Heart right ventricle (tissue), 16 donors: ENCODE measurements at regions of chr11 and their contacts with region 1.

Region 1: DNA sequence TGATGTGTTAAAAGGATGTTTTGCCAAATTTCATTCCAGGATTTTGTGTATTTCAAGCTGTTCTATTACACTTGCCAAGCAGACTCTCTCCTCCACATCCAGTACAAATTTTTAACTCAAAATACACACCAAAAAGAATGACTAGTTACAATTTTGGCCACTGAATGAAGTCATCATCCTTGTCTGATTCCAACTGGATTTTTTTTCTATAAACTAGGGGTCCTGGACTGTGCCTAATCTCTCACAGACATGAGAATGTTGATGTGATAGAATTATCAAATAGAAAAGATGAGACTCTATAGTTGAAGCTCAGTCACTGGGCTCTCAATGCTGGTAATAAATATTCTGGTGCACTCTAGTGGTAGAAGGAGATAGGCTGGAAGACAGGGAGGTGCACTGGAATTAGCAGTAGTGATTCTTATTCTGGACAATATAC is 85.8 kb downstream of the FANCF start:
- DNase-seq: no peak
- ATAC-seq: peak in 1 of 8 donors; percentile 43
- H3K4me3 ChIP-seq: no peak overlapping the region
- H3K27ac ChIP-seq: no peak overlapping the region
- H3K4me1 ChIP-seq: no peaks in the 10 kb centered on the region
- H3K27me3 ChIP-seq: peaks cover 0 to 9% (median 0%) of the 10 kb centered on the region in 7 donors
- CTCF ChIP-seq: peak in 8 of 9 donors; percentile 18 to 63 (median 47)

Region 2: DNA sequence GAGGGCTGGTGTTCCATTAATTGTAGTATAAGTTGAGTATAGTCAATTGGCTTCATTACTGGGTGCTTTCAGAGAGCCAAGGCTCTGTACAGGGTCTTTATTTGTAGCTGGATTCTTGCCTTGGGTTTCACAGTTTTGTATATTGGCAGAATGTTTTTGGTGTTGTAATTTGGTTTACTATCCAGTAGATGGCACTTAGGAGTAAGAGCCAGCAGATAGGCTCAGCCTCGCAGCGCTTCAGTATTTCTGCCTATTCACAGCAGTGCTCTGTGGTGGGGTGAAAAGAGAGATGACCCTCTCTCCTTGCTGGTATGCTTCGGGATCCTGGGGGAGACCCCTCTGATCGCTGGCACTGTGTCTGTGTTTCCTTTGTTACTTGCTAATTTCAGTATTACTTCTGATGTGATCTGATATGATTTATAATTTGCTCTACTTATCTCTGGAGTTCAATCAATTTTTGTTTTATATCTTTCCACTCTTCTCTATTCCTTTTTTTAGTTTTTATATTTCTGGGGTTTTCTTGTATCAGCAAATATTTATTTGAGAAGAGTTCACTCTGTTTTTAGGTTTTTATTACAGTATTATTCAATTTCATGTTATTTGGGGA is 294.8 kb before region 1 on chr11:
- intact Hi-C with region 1: no loop called
- DNase-seq: peak; percentile 11 to 13
- ATAC-seq: peak; percentile 38 to 77 (median 62)
- H3K4me3 ChIP-seq: no peak overlapping the region
- H3K27ac ChIP-seq: no peak overlapping the region
- H3K4me1 ChIP-seq: peaks cover 0 to 2% (median 0%) of the 10 kb centered on the region in 9 donors
- H3K27me3 ChIP-seq: no peaks in the 10 kb centered on the region
- CTCF ChIP-seq: peak; percentile 33 to 71 (median 59)

Region 3: DNA sequence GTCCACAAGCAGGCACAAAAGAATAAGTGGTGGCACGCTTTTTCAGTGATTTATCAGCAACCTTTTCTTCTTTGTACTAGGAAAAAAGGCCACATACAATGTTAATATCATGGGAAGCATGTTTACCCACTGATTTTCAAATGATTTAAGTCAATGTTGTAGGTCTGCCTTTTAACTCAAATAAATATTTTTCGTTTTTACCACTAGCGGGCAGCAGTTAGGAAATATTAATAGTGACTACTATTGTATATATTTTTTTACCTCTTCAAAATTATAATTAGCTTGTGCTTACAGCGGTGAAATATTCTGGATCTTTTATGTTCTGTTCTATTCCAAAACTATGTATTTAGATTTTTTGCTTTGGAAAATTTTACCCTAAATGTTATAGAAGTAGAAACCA is 208.1 kb before region 1 on chr11:
- intact Hi-C with region 1: loop called in 6 of 10 experiments (anchors 2 to 10 kb)
- DNase-seq: no peak
- ATAC-seq: no peak
- H3K4me3 ChIP-seq: no peak overlapping the region
- H3K27ac ChIP-seq: no peak overlapping the region
- H3K4me1 ChIP-seq: no peaks in the 10 kb centered on the region
- H3K27me3 ChIP-seq: peaks cover 0 to 34% (median 14%) of the 10 kb centered on the region in 7 donors
- CTCF ChIP-seq: peak in 1 of 9 donors; percentile 12

Region 4: DNA sequence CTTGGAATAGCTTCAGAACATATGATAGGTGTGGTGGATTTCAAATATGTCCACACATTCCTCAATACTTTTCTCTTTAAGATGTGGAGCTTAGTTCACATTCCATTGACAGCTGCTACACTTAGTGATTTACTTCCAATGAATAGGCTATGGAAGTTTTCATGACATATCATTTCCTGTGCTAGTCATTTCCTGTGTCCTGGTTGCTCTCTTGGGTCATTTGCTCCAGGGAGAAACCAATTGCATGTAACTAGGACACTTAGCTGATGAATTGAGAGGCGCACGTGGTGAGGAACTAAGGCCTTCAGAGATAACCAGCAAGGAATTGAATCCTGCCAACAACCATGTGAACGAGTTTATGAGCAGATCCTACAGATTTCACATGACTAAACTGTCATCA is 80.8 kb before region 1 on chr11:
- intact Hi-C with region 1: no loop called
- DNase-seq: no peak
- ATAC-seq: peak in 1 of 8 donors; percentile 27
- H3K4me3 ChIP-seq: no peak overlapping the region
- H3K27ac ChIP-seq: no peak overlapping the region
- H3K4me1 ChIP-seq: no peaks in the 10 kb centered on the region
- H3K27me3 ChIP-seq: no peaks in the 10 kb centered on the region
- CTCF ChIP-seq: no peak